CD4-positive, alpha-beta T cell (primary cell): ENCODE measurements at regions of chr2 and their contacts with region 1.

Region 1: DNA sequence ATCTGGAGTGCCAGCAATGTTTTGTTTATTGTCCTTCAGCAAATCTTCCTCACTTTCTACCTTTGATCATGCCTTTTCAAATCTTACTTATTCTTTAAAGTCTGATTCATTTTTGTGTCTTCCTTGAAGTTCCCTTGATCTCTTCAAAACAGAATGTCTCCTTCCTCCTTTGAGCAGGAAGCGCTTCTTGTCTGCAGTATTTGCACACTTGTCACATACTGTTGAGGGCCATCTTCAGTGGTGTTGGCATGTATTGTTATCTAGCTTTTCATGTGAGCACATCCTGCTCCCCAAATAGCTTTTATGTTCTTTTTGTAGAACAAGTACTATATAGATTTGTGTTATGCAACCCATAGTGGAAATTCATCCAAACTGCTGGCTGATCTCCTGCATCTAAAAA is 5.9 kb upstream of the CERS6 start:
- DNase-seq: peak in 5 of 14 experiments; percentile 13 to 51 (median 47)
- ATAC-seq: peak; percentile 80
- H3K4me3 ChIP-seq: no peak overlapping the region
- H3K4me3 Mint-ChIP-seq: peak overlapping the region; percentile 30
- H3K27ac ChIP-seq: no peak overlapping the region
- H3K27ac Mint-ChIP-seq: peak overlapping the region; percentile 79
- H3K4me1 ChIP-seq: peaks cover 20% of the 10 kb centered on the region
- H3K4me1 Mint-ChIP-seq: peaks cover 47% of the 10 kb centered on the region
- H3K27me3 ChIP-seq: no peaks in the 10 kb centered on the region
- H3K27me3 Mint-ChIP-seq: no peaks in the 10 kb centered on the region
- CTCF ChIP-seq: no peak

Region 2: GRCh38 chr2:168272225-168272624 is 177.9 kb before region 1 on chr2:
- CTCF ChIA-PET with region 1: no interaction called
- POLR2A ChIA-PET with region 1: no interaction called
- intact Hi-C with region 1: no loop called
- DNase-seq: no peak
- ATAC-seq: no peak
- H3K4me3 ChIP-seq: no peak overlapping the region
- H3K4me3 Mint-ChIP-seq: no peak overlapping the region
- H3K27ac ChIP-seq: no peak overlapping the region
- H3K27ac Mint-ChIP-seq: no peak overlapping the region
- H3K4me1 ChIP-seq: no peaks in the 10 kb centered on the region
- H3K4me1 Mint-ChIP-seq: no peaks in the 10 kb centered on the region
- H3K27me3 ChIP-seq: peaks cover 0 to 4% of the 10 kb centered on the region in 2 experiments
- H3K27me3 Mint-ChIP-seq: no peaks in the 10 kb centered on the region
- CTCF ChIP-seq: no peak

Region 3: GRCh38 chr2:168434146-168434545 is 16.0 kb before region 1 on chr2:
- CTCF ChIA-PET with region 1: no interaction called
- POLR2A ChIA-PET with region 1: interaction called, 5 read pairs
- intact Hi-C with region 1: loop called (anchors 2 kb)
- DNase-seq: peak in 3 of 14 experiments; percentile 15 to 26 (median 25)
- ATAC-seq: no peak
- H3K4me3 ChIP-seq: no peak overlapping the region
- H3K4me3 Mint-ChIP-seq: no peak overlapping the region
- H3K27ac ChIP-seq: no peak overlapping the region
- H3K27ac Mint-ChIP-seq: no peak overlapping the region
- H3K4me1 ChIP-seq: peaks cover 18% of the 10 kb centered on the region
- H3K4me1 Mint-ChIP-seq: peaks cover 87% of the 10 kb centered on the region
- H3K27me3 ChIP-seq: no peaks in the 10 kb centered on the region
- H3K27me3 Mint-ChIP-seq: no peaks in the 10 kb centered on the region
- CTCF ChIP-seq: no peak

Region 4: GRCh38 chr2:168545439-168546082 is 95.4 kb after region 1 on chr2:
- CTCF ChIA-PET with region 1: no interaction called
- POLR2A ChIA-PET with region 1: no interaction called
- intact Hi-C with region 1: no loop called
- DNase-seq: no peak
- ATAC-seq: peak; percentile 34
- H3K4me3 ChIP-seq: no peak overlapping the region
- H3K4me3 Mint-ChIP-seq: no peak overlapping the region
- H3K27ac ChIP-seq: no peak overlapping the region
- H3K27ac Mint-ChIP-seq: peak overlapping the region; percentile 28
- H3K4me1 ChIP-seq: peaks cover 2% of the 10 kb centered on the region
- H3K4me1 Mint-ChIP-seq: peaks cover 56% of the 10 kb centered on the region
- H3K27me3 ChIP-seq: no peaks in the 10 kb centered on the region
- H3K27me3 Mint-ChIP-seq: no peaks in the 10 kb centered on the region
- CTCF ChIP-seq: no peak